ENCODE measurements at regions of chr15 and their contacts with region 1.

Region 1: GRCh38 chr15:90191794-90192509 is 9.2 kb upstream of the SEMA4B start:
- DNase-seq: peak in 8 of 10 donors; percentile 22 to 76 (median 34)
- ATAC-seq: peak; percentile 84
- H3K4me3 Mint-ChIP-seq: peak overlapping the region; percentile 60 to 86 (median 80)
- H3K27ac Mint-ChIP-seq: peak overlapping the region in 9 of 10 donors; percentile 29 to 89 (median 83)
- H3K4me1 Mint-ChIP-seq: peaks cover 21 to 72% (median 33%) of the 10 kb centered on the region in 4 donors
- H3K27me3 Mint-ChIP-seq: no peaks in the 10 kb centered on the region

Region 2: DNA sequence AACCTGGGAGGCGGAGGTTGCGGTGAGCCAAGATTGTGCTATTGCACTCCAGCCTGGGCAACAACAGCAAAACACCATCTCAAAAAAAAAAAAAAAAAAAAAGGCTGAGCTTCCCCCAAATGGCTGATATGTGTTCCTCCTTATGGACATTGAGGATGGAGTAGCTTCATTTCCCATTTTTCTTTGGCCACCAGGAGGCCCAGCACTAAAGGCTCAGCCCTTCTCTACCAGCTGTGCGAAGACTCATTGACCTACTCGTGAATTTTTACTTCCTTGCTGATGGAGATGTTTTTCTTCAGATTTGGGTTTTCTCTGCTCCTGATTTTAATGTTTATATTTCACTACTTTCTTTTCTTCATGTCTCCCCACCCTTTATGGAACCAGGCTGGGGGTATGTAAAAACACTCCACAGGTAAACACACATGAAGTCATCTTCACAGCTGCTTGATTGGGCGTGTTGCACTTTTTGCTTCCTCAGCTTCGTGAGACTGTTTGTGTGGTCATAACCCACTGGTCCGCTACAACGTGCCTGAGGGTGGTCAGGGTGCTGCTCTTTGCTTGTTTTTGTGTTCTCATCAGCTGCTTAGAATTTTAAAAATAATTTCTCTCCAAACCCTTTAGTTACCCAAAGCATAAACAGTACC is 22.7 kb after region 1 on chr15:
- POLR2A ChIA-PET with region 1: interaction called, 16 read pairs
- DNase-seq: peak in 1 of 10 donors; percentile 53
- ATAC-seq: no peak
- H3K4me3 Mint-ChIP-seq: peak overlapping the region in 1 of 10 donors; percentile 65
- H3K27ac Mint-ChIP-seq: peak overlapping the region in 2 of 10 donors; percentile 67 to 84
- H3K4me1 Mint-ChIP-seq: peaks cover 18 to 76% (median 40%) of the 10 kb centered on the region in 4 donors
- H3K27me3 Mint-ChIP-seq: no peaks in the 10 kb centered on the region

Measured in naive thymus-derived CD8-positive, alpha-beta T cell (primary cell).